Activated naive CD4-positive, alpha-beta T cell treated with anti-CD3 and anti-CD28 coated beads for 36 hours (primary cell): ENCODE measurements at regions of chr1 and their contacts with region 1.

Region 1: GRCh38 chr1:192808518-192809306 is at the start of gene RGS2:
- DNase-seq: peak; percentile 86
- H3K4me3 Mint-ChIP-seq: peak within 1 kb of the TSS; percentile 96
- H3K27ac Mint-ChIP-seq: peak within 1 kb of the TSS; percentile 82
- H3K4me1 Mint-ChIP-seq: peaks cover 31% of the 10 kb centered on the region
- H3K27me3 Mint-ChIP-seq: peaks cover 2% of the 10 kb centered on the region
- total RNA-seq, gene RGS2: 11.7 to 11.8 TPM

Region 2: DNA sequence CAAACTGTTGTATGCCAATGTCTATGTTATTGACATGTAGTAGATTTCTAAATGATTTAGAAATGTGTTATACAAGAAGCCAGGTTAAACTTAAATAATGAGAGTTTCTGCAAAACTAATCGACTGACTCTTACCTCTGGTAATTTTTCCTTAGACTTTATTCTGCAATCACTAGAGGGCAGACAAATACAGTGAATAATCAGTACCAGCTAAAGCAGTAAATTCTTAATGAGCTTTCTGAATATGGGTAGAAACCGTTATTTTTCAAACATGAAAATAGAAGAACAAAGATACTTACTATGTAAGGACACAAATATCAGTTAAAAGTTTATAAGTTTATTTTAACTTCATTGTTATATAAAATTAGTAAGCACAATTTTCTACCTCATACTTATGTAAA is 331.1 kb before region 1 on chr1:
- CTCF ChIA-PET with region 1: interaction called, 7 read pairs
- intact Hi-C with region 1: loop called (anchors 2 kb)
- DNase-seq: no peak
- H3K4me3 Mint-ChIP-seq: no peak overlapping the region
- H3K27ac Mint-ChIP-seq: no peak overlapping the region
- H3K4me1 Mint-ChIP-seq: no peaks in the 10 kb centered on the region
- H3K27me3 Mint-ChIP-seq: no peaks in the 10 kb centered on the region

Region 3: GRCh38 chr1:192767798-192768197 is 40.9 kb before region 1 on chr1:
- CTCF ChIA-PET with region 1: no interaction called
- intact Hi-C with region 1: no loop called
- DNase-seq: no peak
- H3K4me3 Mint-ChIP-seq: no peak overlapping the region
- H3K27ac Mint-ChIP-seq: no peak overlapping the region
- H3K4me1 Mint-ChIP-seq: no peaks in the 10 kb centered on the region
- H3K27me3 Mint-ChIP-seq: peaks cover 11% of the 10 kb centered on the region

Region 4: GRCh38 chr1:192904438-192904895 is 95.8 kb after region 1 on chr1:
- CTCF ChIA-PET with region 1: no interaction called
- intact Hi-C with region 1: loop called (anchors 1 kb)
- DNase-seq: peak; percentile 56
- H3K4me3 Mint-ChIP-seq: no peak overlapping the region
- H3K27ac Mint-ChIP-seq: no peak overlapping the region
- H3K4me1 Mint-ChIP-seq: peaks cover 2% of the 10 kb centered on the region
- H3K27me3 Mint-ChIP-seq: no peaks in the 10 kb centered on the region

Region 5: GRCh38 chr1:193031438-193031837 is 222.7 kb after region 1 on chr1:
- CTCF ChIA-PET with region 1: interaction called, 3 read pairs
- intact Hi-C with region 1: loop called (anchors 1 kb)
- DNase-seq: no peak
- H3K4me3 Mint-ChIP-seq: no peak overlapping the region
- H3K27ac Mint-ChIP-seq: no peak overlapping the region
- H3K4me1 Mint-ChIP-seq: peaks cover 15% of the 10 kb centered on the region
- H3K27me3 Mint-ChIP-seq: no peaks in the 10 kb centered on the region

Region 6: GRCh38 chr1:193183019-193183627 is 374.4 kb after region 1 on chr1:
- CTCF ChIA-PET with region 1: no interaction called
- intact Hi-C with region 1: loop called (anchors 2 kb)
- DNase-seq: no peak
- H3K4me3 Mint-ChIP-seq: no peak overlapping the region
- H3K27ac Mint-ChIP-seq: no peak overlapping the region
- H3K4me1 Mint-ChIP-seq: peaks cover 35% of the 10 kb centered on the region
- H3K27me3 Mint-ChIP-seq: no peaks in the 10 kb centered on the region

Region 7: DNA sequence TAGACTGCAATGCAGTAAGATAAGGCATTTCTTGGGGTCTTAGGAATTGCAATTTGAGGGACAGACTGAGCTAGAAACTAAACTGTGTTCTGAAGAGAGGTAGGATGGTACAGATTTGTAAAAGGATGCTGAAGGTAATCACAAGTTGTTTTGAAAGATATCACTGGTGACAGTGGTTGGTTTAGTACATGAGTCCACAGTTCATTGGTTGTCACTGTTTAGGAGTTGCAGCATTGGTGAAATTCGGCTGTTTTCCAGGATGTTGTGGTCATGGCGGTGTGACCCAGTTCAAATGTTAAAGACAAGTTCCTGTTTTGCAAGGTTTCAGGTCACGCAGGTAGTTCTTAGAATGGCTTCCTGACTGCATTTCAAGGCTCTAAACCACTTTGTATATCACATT is 670.5 kb after region 1 on chr1:
- CTCF ChIA-PET with region 1: no interaction called
- intact Hi-C with region 1: loop called (anchors 5 kb)
- DNase-seq: peak; percentile 83
- H3K4me3 Mint-ChIP-seq: no peak overlapping the region
- H3K27ac Mint-ChIP-seq: peak overlapping the region; percentile 68
- H3K4me1 Mint-ChIP-seq: peaks cover 47% of the 10 kb centered on the region
- H3K27me3 Mint-ChIP-seq: no peaks in the 10 kb centered on the region

Region 8: GRCh38 chr1:194295685-194296084 is 1487.0 kb after region 1 on chr1:
- CTCF ChIA-PET with region 1: no interaction called
- intact Hi-C with region 1: loop called (anchors 1 kb)
- DNase-seq: peak; percentile 47
- H3K4me3 Mint-ChIP-seq: no peak overlapping the region
- H3K27ac Mint-ChIP-seq: no peak overlapping the region
- H3K4me1 Mint-ChIP-seq: peaks cover 47% of the 10 kb centered on the region
- H3K27me3 Mint-ChIP-seq: no peaks in the 10 kb centered on the region

Region 9: GRCh38 chr1:194394676-194395075 is 1586.0 kb after region 1 on chr1:
- CTCF ChIA-PET with region 1: no interaction called
- intact Hi-C with region 1: no loop called
- DNase-seq: no peak
- H3K4me3 Mint-ChIP-seq: no peak overlapping the region
- H3K27ac Mint-ChIP-seq: no peak overlapping the region
- H3K4me1 Mint-ChIP-seq: no peaks in the 10 kb centered on the region
- H3K27me3 Mint-ChIP-seq: no peaks in the 10 kb centered on the region